ENCODE measurements at regions of chr1 and their contacts with region 1.

Region 1: DNA sequence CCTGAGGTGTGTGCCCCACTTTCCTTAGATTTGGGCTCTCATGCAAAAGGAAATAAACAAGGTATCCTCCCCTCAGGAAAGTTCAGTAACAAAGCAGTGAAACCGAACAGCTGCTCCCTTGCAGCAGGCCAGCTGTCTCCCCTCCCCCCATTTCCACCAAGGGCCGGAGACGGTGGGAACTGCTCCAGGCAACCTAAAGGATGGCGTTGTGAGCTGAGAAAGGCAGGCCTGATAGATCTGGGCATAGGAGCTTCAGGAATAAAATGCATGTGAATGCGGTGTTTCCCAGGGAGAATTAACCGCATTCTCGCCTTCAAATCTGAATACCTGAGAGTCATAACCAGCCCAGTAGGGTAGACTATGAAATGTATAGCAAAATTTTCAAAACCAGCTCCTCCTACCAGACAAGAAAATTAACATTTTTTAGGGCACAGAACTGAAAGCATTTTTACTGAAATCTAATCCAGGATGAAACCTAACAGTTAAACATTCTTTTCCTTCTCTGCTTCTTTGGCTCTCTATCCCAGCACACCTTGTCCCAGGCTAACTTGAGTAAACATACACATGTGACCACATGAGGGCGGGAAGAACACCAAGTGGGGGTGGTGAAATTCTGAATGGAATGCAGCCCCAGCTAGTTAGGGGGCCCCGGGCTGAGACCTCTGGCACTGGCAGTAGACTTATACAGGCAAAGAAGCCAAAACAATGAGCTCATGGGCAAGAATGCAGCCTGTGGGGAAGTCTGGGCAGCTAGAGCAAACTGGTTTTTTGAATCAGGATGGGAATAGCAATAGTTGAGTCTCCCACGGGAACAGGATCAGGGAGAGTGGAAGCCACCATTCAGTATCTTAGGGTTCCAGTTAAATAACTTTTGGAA is 11.5 kb downstream of the MCL1 start:
- DNase-seq: peak; percentile 45
- H3K4me3 ChIP-seq: no peak overlapping the region
- H3K27ac ChIP-seq: peak overlapping the region; percentile 52
- H3K4me1 ChIP-seq: peaks cover 32% of the 10 kb centered on the region
- H3K27me3 ChIP-seq: no peaks in the 10 kb centered on the region
- CTCF ChIP-seq: no peak

Region 2: DNA sequence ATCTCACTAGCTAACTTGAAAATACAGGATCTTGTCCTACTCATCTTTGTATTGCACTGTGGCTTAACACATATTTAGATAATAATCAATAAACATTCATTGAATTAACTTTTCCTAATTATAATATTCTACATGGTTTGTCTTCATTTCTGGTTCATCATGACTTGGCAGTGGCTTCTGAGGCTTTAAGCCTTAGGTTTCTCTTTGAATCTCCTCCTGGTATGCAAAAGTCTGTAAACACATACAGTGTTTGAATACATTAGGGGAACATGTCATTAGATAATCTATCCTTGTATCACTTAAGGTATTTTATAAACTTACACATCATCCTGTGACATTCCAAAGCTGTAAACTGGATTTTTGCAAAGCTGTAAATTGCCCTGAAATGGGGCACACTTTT is 219.5 kb after region 1 on chr1:
- CTCF ChIA-PET with region 1: no interaction called
- POLR2A ChIA-PET with region 1: interaction called, 12 read pairs
- intact Hi-C with region 1: no loop called
- DNase-seq: no peak
- H3K4me3 ChIP-seq: no peak overlapping the region
- H3K27ac ChIP-seq: no peak overlapping the region
- H3K4me1 ChIP-seq: no peaks in the 10 kb centered on the region
- H3K27me3 ChIP-seq: no peaks in the 10 kb centered on the region
- CTCF ChIP-seq: no peak

Measured in A673 (cell line).